ENCODE measurements at regions of chr11 and their contacts with region 1.

Region 1: DNA sequence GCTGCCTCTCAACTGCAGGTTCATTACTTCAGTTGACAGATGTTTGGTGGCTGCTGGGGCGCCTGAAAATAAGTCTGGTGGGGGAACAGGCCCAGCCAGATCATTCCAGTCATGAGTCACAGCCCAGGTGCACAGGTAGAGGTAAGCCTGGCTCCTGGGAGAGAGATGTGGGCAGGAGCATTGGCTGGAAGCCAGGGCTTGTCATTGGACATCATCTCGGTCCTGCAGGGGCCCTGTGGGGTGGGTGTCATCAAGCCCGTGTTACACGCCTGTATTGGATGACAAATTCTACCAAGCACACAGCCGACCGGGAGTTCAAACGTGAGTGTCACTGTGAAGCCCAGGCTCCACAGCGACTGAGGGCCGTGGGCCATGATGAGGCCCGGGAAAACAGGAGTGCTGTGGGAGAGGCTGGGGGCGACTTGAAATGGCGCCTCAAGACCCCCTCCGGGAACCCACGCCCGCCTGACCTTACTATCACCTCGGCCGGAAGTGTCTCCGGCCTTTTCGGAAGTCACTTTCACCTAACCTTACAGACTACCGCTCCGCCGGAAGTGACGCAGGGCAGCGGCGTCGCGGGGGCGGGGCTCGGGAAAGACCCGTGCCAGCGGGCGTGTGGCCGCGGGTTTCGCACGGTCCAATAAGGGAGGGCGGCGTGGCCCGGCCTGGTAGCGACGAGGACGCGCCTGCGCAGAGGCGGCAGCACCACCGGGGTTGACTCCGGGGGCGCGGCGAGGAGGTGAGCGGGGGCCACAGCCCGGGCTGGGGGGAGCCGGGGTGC is at the start of gene FKBP2:
- DNase-seq: peak; percentile 97 to 99 (median 99)
- H3K4me3 ChIP-seq: peak within 1 kb of the TSS; percentile 67 to 73
- H3K4me3 Mint-ChIP-seq: peak within 1 kb of the TSS; percentile 87 to 97 (median 88)
- H3K27ac ChIP-seq: peak within 1 kb of the TSS; percentile 99
- H3K27ac Mint-ChIP-seq: peak within 1 kb of the TSS; percentile 99 to 100 (median 100)
- H3K4me1 ChIP-seq: peaks cover 38% of the 10 kb centered on the region
- H3K4me1 Mint-ChIP-seq: peaks cover 14 to 52% (median 29%) of the 10 kb centered on the region in 4 donors
- H3K27me3 ChIP-seq: no peaks in the 10 kb centered on the region
- H3K27me3 Mint-ChIP-seq: no peaks in the 10 kb centered on the region
- total RNA-seq, gene FKBP2: 41.4 to 46.4 TPM

Region 2: DNA sequence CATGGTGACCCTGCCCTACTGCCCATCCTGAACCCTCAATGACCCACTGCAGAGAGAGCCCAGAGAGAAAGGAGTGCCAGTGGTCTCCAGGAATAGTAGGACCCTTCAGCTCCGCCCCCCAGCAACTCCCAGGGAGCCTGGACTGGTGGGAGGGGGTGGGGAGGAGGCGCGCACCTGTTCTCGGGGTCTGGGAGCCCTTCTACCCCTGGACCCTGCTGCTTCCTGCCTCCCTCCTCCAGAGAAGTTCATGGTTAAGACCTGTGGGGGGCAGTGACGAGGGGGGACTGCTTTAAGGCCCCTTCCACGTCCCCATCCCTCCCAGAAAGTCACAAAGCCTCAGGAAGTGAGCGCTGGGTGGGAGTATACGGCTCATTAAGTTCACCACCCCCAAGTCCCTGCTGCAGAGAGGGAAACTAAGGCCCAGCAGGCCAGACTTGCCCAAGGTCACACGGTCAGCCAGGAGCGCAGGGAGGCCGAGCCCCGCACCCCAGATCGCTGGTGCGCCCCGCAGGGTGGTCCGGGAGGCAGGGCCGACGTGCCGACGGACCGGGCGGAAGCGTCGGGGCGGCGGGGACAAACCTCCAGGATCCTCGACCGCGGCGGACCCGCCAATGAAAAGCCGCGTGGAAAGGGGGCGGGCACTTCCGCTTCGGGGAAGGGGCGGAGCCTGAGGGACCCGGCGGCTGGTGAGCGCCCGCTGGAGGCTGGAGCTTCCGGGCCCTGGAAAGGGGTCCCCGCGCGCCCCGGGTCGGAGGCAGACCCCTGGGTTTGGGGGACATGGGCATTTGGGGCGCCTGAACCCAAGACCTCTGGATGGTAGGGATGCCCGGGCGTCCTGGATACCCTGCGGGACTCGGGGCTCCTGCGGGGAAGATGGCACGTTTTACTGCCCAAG is 14.7 kb before region 1 on chr11 and contains the starts of genes NUDT22 and TRPT1:
- CTCF ChIA-PET with region 1: interaction called, 4 read pairs
- POLR2A ChIA-PET with region 1: interaction called, 200 read pairs
- intact Hi-C with region 1: loop called (anchors 1 kb)
- DNase-seq: peak; percentile 82 to 88 (median 85)
- H3K4me3 ChIP-seq: peak within 1 kb of the TSS; percentile 86 to 94
- H3K4me3 Mint-ChIP-seq: peak within 1 kb of the TSS; percentile 89 to 94 (median 92)
- H3K27ac ChIP-seq: peak within 1 kb of the TSS; percentile 77
- H3K27ac Mint-ChIP-seq: peak within 1 kb of the TSS; percentile 88 to 97 (median 93)
- H3K4me1 ChIP-seq: peaks cover 43% of the 10 kb centered on the region
- H3K4me1 Mint-ChIP-seq: peaks cover 13 to 50% (median 28%) of the 10 kb centered on the region in 4 donors
- H3K27me3 ChIP-seq: no peaks in the 10 kb centered on the region
- H3K27me3 Mint-ChIP-seq: no peaks in the 10 kb centered on the region
- total RNA-seq, gene NUDT22: 83.9 to 101 TPM
- total RNA-seq, gene TRPT1: 37.6 to 42.1 TPM